Esophagus muscularis mucosa (tissue), 4 donors: ENCODE measurements at regions of chr19 and their contacts with region 1.

Region 1: GRCh38 chr19:14432791-14433553 is at the start of gene PKN1:
- DNase-seq: no peak
- H3K4me3 ChIP-seq: peak within 1 kb of the TSS; percentile 78 to 97 (median 92)
- H3K27ac ChIP-seq: peak within 1 kb of the TSS; percentile 87 to 94 (median 90)
- H3K4me1 ChIP-seq: peaks cover 38 to 61% (median 54%) of the 10 kb centered on the region in 4 donors
- H3K27me3 ChIP-seq: no peaks in the 10 kb centered on the region
- CTCF ChIP-seq: peak in 1 of 3 experiments; percentile 9
- EP300 ChIP-seq: no peak
- POLR2A ChIP-seq: no peak
- total RNA-seq, gene PKN1: 120 to 233 (median 167) TPM

Region 2: GRCh38 chr19:14366498-14366915 is 66.5 kb before region 1 on chr19:
- intact Hi-C with region 1: no loop called
- DNase-seq: peak; percentile 95
- H3K4me3 ChIP-seq: no peak overlapping the region
- H3K27ac ChIP-seq: peak overlapping the region in 1 of 4 donors; percentile 80
- H3K4me1 ChIP-seq: peaks cover 23 to 49% (median 48%) of the 10 kb centered on the region in 4 donors
- H3K27me3 ChIP-seq: no peaks in the 10 kb centered on the region
- CTCF ChIP-seq: no peak
- EP300 ChIP-seq: no peak
- POLR2A ChIP-seq: no peak

Region 3: GRCh38 chr19:14419106-14419813 is 13.7 kb before region 1 on chr19 and contains the start of gene DDX39A:
- intact Hi-C with region 1: loop called (anchors 2 kb)
- DNase-seq: peak; percentile 100
- H3K4me3 ChIP-seq: peak within 1 kb of the TSS; percentile 78 to 95 (median 88)
- H3K27ac ChIP-seq: peak within 1 kb of the TSS; percentile 87 to 95 (median 94)
- H3K4me1 ChIP-seq: peaks cover 29 to 50% (median 42%) of the 10 kb centered on the region in 4 donors
- H3K27me3 ChIP-seq: no peaks in the 10 kb centered on the region
- CTCF ChIP-seq: peak in 1 of 3 experiments; percentile 22
- EP300 ChIP-seq: no peak
- POLR2A ChIP-seq: peak; percentile 65
- total RNA-seq, gene DDX39A: 39.3 to 56.3 (median 42.1) TPM

Region 4: DNA sequence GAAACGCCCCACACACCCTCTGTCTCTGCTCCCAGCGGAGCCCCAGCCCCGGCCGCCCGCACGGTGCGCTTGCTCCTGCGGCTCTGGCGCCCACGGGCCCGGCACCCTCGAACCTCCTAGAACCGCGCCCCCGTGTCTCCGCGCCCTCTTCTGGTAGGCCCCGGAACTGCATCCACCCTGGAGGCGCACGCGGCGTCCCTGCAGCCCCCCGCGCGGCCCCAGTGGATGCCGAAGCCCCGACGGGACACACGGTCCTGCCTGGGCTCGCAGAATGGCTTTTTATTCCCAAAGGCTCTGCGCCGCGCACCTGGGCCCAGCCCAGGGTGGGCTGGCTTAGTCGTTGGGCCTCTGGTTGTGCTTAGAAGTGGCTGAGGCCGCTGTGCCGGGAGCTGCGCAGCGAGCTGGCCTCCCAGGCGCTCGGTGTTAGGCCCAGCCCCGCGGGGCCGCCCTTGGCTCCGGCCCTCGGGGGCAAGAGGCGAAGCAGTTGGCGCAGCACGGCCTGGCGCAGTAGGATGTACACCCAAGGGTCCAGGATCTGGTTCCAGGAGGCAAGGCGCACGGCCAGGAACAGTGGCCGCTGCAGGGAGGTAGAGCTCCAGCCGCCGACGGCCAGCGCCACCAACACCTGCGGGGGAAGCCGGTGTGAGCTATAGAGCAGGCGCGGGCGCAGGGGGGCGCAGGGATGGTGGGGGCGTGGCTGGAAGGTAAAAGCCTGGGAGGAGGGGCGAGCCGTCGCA is 39.4 kb after region 1 on chr19:
- intact Hi-C with region 1: loop called (anchors 5 kb)
- DNase-seq: peak; percentile 94
- H3K4me3 ChIP-seq: peak overlapping the region; percentile 28 to 49 (median 35)
- H3K27ac ChIP-seq: peak overlapping the region in 1 of 4 donors; percentile 42
- H3K4me1 ChIP-seq: peaks cover 29 to 60% (median 55%) of the 10 kb centered on the region in 4 donors
- H3K27me3 ChIP-seq: peaks cover 0 to 34% (median 9%) of the 10 kb centered on the region in 4 donors
- CTCF ChIP-seq: peak in 2 of 3 experiments; percentile 94 to 98
- EP300 ChIP-seq: no peak
- POLR2A ChIP-seq: no peak